Activated B cell treated with CpG ODN at 0.5 μM for 24 hours (primary cell): ENCODE measurements at regions of chr14 and their contacts with region 1.

Region 1: GRCh38 chr14:65412032-65412846 is at the start of gene FUT8:
- DNase-seq: peak; percentile 93
- ATAC-seq: peak; percentile 88
- H3K4me3 Mint-ChIP-seq: peak within 1 kb of the TSS; percentile 99
- H3K27ac Mint-ChIP-seq: peak within 1 kb of the TSS; percentile 99
- H3K4me1 Mint-ChIP-seq: peaks cover 42% of the 10 kb centered on the region
- H3K27me3 Mint-ChIP-seq: no peaks in the 10 kb centered on the region
- CTCF ChIP-seq: no peak
- total RNA-seq, gene FUT8: 115 and 123 TPM in 2 replicates

Region 2: GRCh38 chr14:65102441-65103149 is 309.6 kb before region 1 on chr14 and contains the start of gene MAX:
- CTCF ChIA-PET with region 1: no interaction called
- POLR2A ChIA-PET with region 1: interaction called, 22 read pairs
- intact Hi-C with region 1: loop called (anchors 1 kb)
- DNase-seq: peak; percentile 92
- ATAC-seq: peak; percentile 86
- H3K4me3 Mint-ChIP-seq: peak within 1 kb of the TSS; percentile 89
- H3K27ac Mint-ChIP-seq: peak within 1 kb of the TSS; percentile 95
- H3K4me1 Mint-ChIP-seq: peaks cover 42% of the 10 kb centered on the region
- H3K27me3 Mint-ChIP-seq: no peaks in the 10 kb centered on the region
- CTCF ChIP-seq: no peak
- total RNA-seq, gene MAX: 115 and 116 TPM in 2 replicates

Region 3: DNA sequence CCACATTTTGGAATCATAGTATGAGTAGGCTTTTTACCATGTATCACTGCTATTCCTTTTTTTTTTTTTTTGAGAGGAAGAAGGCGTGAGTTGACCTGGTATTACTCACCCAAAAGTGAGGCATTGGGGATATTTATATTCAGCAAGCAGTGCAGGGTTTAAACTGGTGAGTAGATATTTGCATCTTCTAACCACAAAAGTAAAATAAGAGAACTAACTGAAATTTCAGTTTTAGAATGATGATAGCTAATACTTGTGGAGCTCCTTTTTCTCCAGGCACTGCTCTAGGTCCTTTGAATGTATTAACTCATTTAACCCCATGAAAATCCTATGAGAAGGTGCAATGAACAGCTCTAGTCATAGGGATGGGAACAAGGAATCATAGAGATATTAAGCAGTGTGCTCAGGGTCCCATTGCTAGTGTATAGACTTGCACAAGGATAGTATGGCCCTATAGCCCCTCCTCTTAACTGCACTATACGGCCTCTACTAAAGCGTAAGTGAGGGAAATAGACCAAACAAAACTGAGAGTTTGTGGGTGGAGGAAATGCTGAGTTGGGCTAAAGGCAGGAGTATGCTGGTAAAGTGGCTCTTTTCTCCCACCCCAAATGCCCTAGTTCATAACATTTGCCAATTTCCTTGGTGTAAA is 205.7 kb before region 1 on chr14:
- CTCF ChIA-PET with region 1: interaction called, 8 read pairs
- POLR2A ChIA-PET with region 1: interaction called, 112 read pairs
- intact Hi-C with region 1: loop called (anchors 1 kb)
- DNase-seq: no peak
- ATAC-seq: peak; percentile 60
- H3K4me3 Mint-ChIP-seq: peak overlapping the region; percentile 76
- H3K27ac Mint-ChIP-seq: peak overlapping the region; percentile 96
- H3K4me1 Mint-ChIP-seq: peaks cover 89% of the 10 kb centered on the region
- H3K27me3 Mint-ChIP-seq: no peaks in the 10 kb centered on the region
- CTCF ChIP-seq: no peak

Region 4: DNA sequence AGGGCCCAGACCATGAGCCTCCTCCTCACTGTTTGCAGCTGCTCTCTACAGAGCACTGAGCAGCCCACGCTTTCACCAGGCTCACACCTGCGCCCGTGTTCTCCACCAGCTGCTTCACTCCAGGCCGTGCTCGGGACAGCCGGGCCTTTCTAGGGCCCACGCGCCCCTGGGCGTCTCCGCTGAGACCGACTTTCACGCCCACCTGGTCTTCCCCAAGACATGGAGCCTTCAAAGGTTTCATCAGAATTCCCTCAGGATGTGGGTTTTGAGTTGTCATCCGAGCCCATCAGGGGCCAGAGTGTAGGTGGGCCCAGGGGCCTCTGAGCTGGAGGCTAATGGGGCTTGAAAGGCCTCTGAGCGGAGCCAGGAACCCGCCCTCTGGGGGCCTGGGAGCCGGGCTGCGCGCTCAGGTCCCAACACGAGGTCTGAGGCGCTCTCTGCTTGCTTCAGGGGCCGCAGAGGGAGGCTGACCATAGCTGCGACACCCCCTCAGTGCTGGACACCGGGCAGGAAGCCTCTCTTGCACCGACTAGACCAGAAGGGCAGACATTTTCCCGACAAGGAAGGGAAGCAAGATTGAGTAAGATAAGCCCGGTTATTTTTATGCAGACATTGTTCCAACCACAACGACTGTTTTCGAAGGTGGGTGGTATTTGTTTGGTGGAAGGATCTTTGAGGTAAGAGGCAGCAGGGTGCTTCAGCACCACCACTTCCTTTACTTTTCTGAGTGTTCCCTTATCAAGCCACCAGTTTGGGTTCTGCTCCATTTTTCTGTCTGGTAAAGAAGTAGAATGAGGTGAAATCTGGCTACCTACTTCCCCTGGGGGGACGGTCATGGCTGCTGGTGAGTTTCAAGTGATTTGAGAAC is 124.7 kb before region 1 on chr14:
- CTCF ChIA-PET with region 1: interaction called, 114 read pairs
- POLR2A ChIA-PET with region 1: interaction called, 183 read pairs
- intact Hi-C with region 1: loop called (anchors 1 kb)
- DNase-seq: peak; percentile 60
- ATAC-seq: peak; percentile 64
- H3K4me3 Mint-ChIP-seq: peak overlapping the region; percentile 74
- H3K27ac Mint-ChIP-seq: peak overlapping the region; percentile 96
- H3K4me1 Mint-ChIP-seq: peaks cover 89% of the 10 kb centered on the region
- H3K27me3 Mint-ChIP-seq: no peaks in the 10 kb centered on the region
- CTCF ChIP-seq: no peak

Region 5: GRCh38 chr14:65356327-65356852 is 55.8 kb before region 1 on chr14:
- CTCF ChIA-PET with region 1: interaction called, 6 read pairs
- POLR2A ChIA-PET with region 1: interaction called, 31 read pairs
- intact Hi-C with region 1: loop called (anchors 1 kb)
- DNase-seq: no peak
- ATAC-seq: no peak
- H3K4me3 Mint-ChIP-seq: no peak overlapping the region
- H3K27ac Mint-ChIP-seq: peak overlapping the region; percentile 71
- H3K4me1 Mint-ChIP-seq: peaks cover 87% of the 10 kb centered on the region
- H3K27me3 Mint-ChIP-seq: no peaks in the 10 kb centered on the region
- CTCF ChIP-seq: no peak

Region 6: DNA sequence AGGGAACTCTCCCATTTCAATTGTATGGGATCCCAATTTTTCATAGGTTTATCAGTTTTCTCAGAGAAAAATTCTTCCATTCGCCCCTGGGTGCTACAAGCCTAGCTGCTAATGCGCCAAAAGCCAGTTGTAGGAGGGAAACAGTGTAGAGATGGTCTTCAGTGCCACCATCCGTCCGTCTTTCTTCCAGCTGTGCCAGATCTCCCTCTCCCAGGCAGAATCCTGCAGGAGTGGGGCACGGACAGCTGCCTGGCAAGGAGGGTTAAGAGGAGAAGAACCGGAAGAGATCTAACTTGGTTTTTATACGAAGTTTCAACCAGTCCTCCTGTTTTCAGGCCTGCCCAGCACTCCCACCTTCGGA is 38.6 kb before region 1 on chr14:
- CTCF ChIA-PET with region 1: no interaction called
- POLR2A ChIA-PET with region 1: no interaction called
- intact Hi-C with region 1: no loop called
- DNase-seq: no peak
- ATAC-seq: no peak
- H3K4me3 Mint-ChIP-seq: no peak overlapping the region
- H3K27ac Mint-ChIP-seq: no peak overlapping the region
- H3K4me1 Mint-ChIP-seq: peaks cover 35% of the 10 kb centered on the region
- H3K27me3 Mint-ChIP-seq: no peaks in the 10 kb centered on the region
- CTCF ChIP-seq: no peak

Region 7: DNA sequence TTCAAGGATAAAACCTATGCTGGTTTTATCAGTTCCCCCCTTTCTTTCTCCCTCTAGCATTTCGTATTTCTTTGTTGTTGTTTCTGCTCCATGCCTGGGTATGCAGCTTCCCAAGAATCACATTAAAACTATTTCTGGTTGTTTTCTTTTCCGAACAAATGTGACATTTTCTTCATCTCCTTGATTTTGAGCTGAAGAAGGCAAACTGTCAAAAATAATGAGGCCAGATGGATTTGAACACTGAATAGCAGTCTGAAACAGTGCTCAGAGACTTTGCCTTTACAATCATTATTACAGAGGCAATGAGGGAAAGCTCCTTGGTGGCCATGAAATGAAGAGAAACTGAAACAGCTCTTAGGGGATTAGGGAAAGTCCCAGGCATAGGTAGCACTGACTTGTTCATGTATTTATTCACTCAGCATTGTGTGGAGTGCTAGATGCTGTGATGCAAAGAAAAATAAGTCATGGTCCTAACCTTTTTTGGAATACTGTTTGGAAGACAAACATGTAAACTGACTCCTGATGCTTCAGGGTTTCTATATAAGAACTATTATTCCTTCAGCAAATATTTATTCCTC is 319.8 kb after region 1 on chr14:
- CTCF ChIA-PET with region 1: no interaction called
- POLR2A ChIA-PET with region 1: no interaction called
- intact Hi-C with region 1: loop called (anchors 5 kb)
- DNase-seq: no peak
- ATAC-seq: peak; percentile 76
- H3K4me3 Mint-ChIP-seq: no peak overlapping the region
- H3K27ac Mint-ChIP-seq: peak overlapping the region; percentile 64
- H3K4me1 Mint-ChIP-seq: peaks cover 12% of the 10 kb centered on the region
- H3K27me3 Mint-ChIP-seq: no peaks in the 10 kb centered on the region
- CTCF ChIP-seq: no peak

Region 8: DNA sequence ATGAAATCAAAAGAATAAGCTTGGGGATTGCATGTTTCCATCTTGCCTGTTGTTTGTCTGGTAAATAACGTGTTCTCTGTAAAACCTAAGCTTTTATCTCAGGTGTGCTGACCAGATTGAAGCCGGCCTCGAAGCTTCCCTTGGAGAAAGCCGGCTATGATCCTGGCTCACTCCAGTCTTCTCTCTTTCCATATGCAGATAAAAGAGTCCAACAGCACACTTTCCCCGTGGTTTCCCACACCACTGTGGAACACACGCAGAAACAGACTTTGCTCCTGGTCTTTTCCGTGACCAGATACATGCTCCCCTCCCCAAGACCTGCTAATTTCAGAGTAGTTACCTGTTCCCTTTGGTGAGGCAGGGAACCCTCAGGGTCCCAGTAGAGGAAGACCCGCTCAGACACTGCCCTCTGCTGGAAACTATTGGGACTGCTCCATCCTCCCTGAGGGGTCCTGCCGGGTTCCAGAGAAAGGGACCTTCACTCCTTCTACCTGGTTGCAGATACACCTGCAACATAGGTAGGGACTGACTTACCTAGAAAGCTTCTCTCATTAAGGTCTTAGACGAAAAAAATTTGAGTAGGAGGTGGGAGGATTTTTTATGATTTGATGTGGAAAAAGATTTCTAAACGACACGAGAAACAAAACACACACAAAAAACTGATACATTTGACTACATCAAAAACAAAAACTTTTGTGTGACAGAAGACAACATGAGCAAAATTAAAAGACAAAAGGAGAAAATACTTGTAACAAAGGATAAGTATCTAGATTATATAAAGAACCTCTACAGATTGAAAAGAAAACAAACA is 658.5 kb after region 1 on chr14:
- CTCF ChIA-PET with region 1: interaction called, 13 read pairs
- POLR2A ChIA-PET with region 1: no interaction called
- intact Hi-C with region 1: no loop called
- DNase-seq: peak; percentile 48
- ATAC-seq: peak; percentile 75
- H3K4me3 Mint-ChIP-seq: no peak overlapping the region
- H3K27ac Mint-ChIP-seq: no peak overlapping the region
- H3K4me1 Mint-ChIP-seq: no peaks in the 10 kb centered on the region
- H3K27me3 Mint-ChIP-seq: peaks cover 7% of the 10 kb centered on the region
- CTCF ChIP-seq: peak; percentile 63